Activated T-helper 1 cell treated with anti-CD3 and anti-CD28 coated beads, Interleukin-12 subunit alpha, Interleukin-12 subunit beta, Interleukin-2, Interleukin-4 antibody, amounts not matched to agents 30 ng/mL and 10 ng/mL and 1 ng/mL, durations not matched to agents 14 hours and 24 hours and 36 hours (primary cell): ENCODE measurements at regions of chr9 and their contacts with region 1.

Region 1: DNA sequence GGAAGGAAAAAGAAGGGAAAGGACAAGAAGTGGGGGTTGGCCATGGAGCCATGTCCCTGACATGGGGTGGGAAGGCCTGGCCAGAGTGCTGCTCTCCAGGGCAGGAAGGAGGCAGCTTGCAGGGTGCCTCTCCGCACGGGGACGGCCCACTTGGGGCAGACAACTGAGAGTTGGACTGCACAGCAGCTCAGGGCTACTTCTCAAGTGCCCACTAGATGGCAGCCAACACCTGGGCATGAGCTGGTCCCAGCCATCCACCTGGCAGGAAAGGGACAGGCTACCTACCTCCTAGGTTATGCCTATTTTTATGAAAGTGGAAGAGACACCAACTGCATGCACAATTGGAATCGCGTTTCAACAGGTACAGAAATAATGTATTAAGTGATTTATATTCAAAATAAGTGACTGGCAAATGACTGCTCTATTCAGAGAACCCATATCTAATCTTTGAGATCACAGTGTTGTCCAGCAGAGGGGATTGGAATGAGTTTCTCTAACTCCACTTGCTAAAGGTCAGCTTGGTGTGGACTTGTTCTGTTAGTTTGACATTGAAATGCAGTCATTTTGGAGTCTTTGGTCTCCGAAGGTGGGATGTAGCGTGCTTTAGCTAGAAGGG is 113.4 kb downstream of the SYK start:
- DNase-seq: peak; percentile 59
- H3K4me3 Mint-ChIP-seq: no peak overlapping the region
- H3K27ac Mint-ChIP-seq: no peak overlapping the region
- H3K4me1 Mint-ChIP-seq: peaks cover 10% of the 10 kb centered on the region
- H3K27me3 Mint-ChIP-seq: no peaks in the 10 kb centered on the region

Region 2: GRCh38 chr9:91060503-91061343 is 145.7 kb after region 1 on chr9:
- intact Hi-C with region 1: no loop called
- DNase-seq: no peak
- H3K4me3 Mint-ChIP-seq: peak overlapping the region; percentile 6
- H3K27ac Mint-ChIP-seq: peak overlapping the region; percentile 70
- H3K4me1 Mint-ChIP-seq: peaks cover 40% of the 10 kb centered on the region
- H3K27me3 Mint-ChIP-seq: peaks cover 2% of the 10 kb centered on the region

Region 3: GRCh38 chr9:91164724-91165520 is 249.9 kb after region 1 on chr9:
- intact Hi-C with region 1: loop called (anchors 5 kb)
- DNase-seq: peak; percentile 74
- H3K4me3 Mint-ChIP-seq: peak overlapping the region; percentile 82
- H3K27ac Mint-ChIP-seq: peak overlapping the region; percentile 98
- H3K4me1 Mint-ChIP-seq: peaks cover 62% of the 10 kb centered on the region
- H3K27me3 Mint-ChIP-seq: no peaks in the 10 kb centered on the region

Region 4: DNA sequence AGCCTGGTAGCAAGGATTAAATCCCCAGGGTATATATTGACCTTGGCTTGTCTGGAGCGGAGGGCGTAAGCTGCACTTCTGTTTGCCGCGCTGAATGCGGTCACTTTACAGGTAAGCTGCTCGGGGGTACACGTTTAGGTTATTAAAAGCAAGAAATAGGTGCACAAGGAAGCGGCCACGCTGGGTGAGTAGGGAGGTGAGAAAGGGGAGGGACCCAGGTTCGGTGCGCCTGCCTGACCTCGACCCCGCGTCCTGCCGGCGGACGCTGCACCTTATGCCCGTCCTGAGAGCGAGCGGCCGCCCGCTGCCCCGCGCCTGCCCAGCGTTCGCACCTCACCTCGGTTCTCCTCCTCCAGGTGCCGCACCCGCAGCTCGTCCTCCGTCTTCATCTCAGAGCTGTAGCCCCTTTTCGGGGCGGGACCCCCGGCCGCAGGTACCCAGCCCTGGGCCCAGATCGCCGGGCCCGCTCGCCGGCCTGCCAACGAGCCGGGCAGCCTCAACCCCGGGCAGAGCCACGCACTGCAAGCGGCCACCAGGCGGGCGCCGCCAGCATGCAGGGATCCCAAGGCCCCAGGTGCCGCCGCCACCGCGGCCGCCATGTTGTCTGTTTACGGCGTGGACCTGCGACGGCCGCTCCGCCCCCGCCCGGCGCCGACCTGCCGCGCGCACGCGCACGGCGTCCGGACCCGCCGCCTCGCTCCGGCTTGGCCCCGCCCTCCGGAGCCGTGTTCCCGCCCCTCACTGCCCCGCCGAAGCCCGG is 446.5 kb after region 1 on chr9 and contains the start of gene AUH:
- intact Hi-C with region 1: loop called (anchors 10 kb)
- DNase-seq: peak; percentile 85
- H3K4me3 Mint-ChIP-seq: peak within 1 kb of the TSS; percentile 97
- H3K27ac Mint-ChIP-seq: peak within 1 kb of the TSS; percentile 94
- H3K4me1 Mint-ChIP-seq: peaks cover 48% of the 10 kb centered on the region
- H3K27me3 Mint-ChIP-seq: no peaks in the 10 kb centered on the region
- total RNA-seq, gene AUH: 50.4 and 53.3 TPM in 2 replicates

Region 5: DNA sequence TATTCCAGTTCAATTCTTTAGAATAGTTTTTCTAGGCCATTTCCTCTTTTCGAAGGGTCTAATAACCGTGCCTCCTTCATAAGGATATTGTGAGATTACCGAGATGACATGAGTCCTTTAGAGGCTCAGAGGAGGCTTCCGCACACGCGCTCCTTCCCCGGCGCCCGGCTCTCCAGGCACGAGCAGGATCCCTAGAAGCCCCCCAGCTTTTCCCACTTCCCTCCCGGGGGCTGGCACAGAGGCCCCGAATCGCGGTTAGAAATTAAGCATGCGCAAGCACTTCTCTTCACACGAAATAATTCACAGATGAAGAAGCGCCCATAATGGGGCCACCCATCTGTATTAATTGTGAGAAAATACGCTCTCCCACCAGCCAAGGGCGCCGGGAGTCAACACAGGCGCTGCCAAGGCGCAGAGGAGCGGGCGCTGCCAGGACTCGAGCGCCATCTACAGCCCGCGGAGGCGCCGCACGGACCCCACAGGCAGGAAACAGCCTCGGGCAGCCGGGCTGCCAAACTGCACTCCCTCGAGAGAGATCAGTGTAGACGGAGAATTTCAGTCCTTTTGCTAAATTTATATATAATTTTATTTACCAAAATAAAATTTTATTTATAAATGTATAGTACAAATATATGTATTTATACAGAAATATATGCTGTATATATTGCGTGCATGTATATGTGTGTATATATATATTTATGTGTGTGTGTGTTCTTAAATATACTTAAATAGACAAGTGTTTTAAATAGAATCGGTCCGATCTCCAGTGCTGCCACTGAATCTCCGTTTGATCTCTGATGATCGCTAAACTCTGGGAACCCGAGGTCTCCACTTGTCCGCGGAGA is 766.7 kb after region 1 on chr9:
- intact Hi-C with region 1: loop called (anchors 1 kb)
- DNase-seq: peak; percentile 57
- H3K4me3 Mint-ChIP-seq: peak overlapping the region; percentile 53
- H3K27ac Mint-ChIP-seq: no peak overlapping the region
- H3K4me1 Mint-ChIP-seq: peaks cover 5% of the 10 kb centered on the region
- H3K27me3 Mint-ChIP-seq: peaks cover 27% of the 10 kb centered on the region

Region 6: DNA sequence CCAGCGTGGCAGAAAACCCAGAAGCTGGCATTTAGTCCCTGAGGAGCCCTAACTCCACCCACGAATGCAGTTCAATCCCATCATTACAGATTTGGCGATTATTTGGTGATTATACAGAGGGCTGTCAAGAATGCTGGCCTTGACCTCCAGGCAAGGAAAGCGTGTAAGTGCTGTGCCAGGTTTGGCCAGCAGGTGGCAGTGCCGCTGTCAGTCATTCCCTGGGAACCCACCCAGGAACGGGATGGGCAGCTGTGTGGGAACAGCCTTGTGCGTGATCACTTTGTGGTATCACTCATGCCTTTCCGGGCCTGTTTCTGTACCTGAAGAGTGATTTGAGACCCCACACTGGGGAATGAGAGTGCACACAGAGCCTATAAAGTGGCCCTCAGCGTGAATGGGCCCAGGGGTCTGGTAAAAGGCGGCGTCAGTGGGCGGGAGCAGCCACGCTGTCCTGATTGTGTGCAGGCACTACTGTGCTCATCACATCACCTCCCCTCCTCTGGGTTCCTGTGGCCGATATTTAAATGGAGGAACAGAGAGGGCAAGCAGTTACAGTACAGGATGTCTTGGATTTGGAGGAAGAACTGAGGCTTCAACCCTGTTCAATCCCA is 819.5 kb after region 1 on chr9:
- intact Hi-C with region 1: loop called (anchors 2 kb)
- DNase-seq: peak; percentile 33
- H3K4me3 Mint-ChIP-seq: no peak overlapping the region
- H3K27ac Mint-ChIP-seq: no peak overlapping the region
- H3K4me1 Mint-ChIP-seq: peaks cover 8% of the 10 kb centered on the region
- H3K27me3 Mint-ChIP-seq: peaks cover 2% of the 10 kb centered on the region